ENCODE measurements at regions of chr20 and their contacts with region 1.

Region 1: DNA sequence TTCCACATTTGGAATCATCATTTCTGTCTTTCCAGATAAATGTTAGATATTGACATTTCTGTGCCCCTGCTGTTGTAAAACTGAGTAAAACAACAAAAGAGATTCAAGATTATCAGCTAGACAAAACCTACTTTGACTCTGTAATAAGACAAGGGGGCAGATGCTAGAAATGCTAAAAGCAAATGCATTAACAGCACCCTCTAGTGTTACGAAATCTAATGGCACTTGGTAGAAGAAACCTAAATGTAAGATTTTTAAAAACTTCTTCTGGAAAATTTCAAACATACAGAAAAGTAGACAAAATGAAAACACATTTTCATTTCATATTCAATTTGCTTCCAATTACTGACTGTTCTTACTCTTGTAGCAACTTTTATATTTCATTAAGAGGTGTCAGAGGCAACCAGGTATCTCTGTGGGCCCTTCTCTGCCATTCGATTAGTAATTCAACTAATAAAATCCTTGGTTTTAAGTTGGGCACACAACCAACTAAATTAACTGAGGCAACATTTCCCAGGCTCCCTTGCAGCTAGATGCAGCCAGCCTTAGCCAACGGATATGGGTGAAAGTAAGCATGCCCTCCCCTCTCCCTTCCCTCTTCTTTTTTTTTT is 45.0 kb downstream of the SLC23A2 start:
- DNase-seq: no peak
- ATAC-seq: peak in 1 of 2 donors; percentile 29

Region 2: DNA sequence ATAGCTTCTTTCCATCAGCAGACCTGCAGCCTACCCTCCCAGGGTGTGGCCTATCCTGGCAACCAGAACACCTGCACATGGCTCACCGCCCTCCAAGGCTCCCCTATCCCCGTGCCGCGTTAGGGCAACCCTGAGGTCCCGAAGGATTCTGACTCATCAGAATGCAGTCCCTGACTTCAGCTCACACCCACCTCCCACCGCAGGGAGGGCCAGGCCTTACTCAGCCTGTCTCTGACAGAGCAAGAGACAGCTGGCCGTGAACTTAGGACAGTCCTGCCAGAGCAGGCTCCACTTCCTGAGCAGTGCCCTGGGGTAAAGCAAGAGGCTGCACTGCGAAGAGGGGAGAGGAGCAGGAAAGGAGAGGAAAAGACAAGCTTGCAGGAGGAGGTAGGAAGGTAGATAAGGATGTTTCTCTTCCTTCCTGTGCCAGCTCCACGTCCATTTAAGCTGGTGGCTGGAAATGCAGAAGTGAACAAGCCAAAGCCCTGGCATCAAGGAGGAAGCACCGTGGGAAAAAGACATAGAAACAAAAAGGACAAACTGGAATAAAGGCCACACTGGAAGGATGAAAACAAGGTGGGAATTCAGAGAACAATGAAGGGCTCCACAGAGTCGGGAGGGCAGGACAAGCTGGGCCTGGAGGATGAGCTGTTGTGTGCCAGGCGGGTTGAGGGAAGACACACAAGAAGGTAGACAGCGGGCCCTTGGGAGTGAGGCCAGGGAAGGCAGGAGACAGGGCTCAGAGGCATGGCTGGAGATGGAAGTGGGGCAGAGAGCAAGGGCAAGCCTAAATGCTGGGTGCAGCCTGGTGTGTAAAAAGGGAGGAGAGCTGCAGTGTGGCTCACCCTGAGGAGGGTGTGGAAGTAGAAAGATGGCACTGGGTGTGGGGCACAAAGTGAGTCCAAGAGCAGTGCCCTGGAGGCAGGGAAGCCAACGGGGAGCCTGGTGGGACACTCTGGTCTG is 57.7 kb before region 1 on chr20:
- intact Hi-C with region 1: no loop called
- DNase-seq: peak; percentile 64
- ATAC-seq: peak; percentile 68 to 89

Region 3: GRCh38 chr20:5100684-5101347 is 144.5 kb after region 1 on chr20:
- intact Hi-C with region 1: loop called (anchors 5 kb)
- DNase-seq: peak; percentile 75
- ATAC-seq: peak; percentile 82 to 84

Measured in left cardiac atrium (tissue), 4 donors.